ENCODE measurements at regions of chr15 and their contacts with region 1.

Region 1: DNA sequence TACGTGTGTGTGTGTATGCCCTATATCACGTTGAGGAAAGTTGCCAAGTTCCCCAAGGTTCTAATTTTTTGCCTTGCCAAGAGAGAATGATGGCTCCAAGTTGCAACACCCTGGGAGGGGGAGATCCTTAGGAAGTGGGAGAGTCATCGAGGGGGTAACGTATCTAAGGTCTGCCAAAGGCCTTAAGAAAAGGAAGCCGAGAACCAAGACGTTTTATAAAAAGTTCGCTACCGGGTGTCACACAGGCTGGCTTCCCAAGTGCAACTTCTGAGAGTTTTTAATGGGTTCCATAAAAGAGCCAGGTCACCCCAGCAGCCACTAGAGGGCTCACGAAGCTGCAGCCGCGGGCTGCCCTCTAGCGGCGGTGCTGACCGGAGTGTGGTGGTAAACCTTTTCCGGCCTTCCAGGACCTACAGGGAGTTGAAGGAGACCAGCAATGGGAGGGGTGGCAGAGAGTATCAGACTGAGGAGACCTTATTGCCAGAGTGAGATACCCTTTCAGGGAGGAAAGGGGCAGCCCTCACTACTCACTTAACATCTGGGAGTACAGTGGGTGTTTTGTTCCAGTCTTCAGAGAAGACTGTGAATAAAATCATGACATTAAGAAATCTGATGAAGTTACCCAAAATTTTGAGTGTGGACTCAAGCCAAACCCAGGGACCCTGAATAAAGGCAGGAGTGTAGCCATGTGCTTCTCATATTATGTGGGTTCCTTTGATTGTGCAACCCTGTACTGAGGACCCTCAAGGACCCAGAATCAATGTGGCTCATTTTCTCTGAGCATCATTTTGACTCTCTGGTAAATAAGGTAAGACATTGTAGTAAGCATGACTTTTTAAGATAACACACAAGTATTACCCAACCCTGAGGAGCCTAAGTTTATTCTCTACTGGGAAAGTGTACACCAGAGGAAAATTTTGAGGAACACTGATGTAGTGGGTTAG is 2.5 kb upstream of the RFX7 start:
- DNase-seq: peak; percentile 82
- H3K4me3 Mint-ChIP-seq: peak overlapping the region; percentile 89
- H3K27ac Mint-ChIP-seq: peak overlapping the region; percentile 98
- H3K4me1 Mint-ChIP-seq: peaks cover 31% of the 10 kb centered on the region
- H3K27me3 Mint-ChIP-seq: peaks cover 1% of the 10 kb centered on the region

Region 2: DNA sequence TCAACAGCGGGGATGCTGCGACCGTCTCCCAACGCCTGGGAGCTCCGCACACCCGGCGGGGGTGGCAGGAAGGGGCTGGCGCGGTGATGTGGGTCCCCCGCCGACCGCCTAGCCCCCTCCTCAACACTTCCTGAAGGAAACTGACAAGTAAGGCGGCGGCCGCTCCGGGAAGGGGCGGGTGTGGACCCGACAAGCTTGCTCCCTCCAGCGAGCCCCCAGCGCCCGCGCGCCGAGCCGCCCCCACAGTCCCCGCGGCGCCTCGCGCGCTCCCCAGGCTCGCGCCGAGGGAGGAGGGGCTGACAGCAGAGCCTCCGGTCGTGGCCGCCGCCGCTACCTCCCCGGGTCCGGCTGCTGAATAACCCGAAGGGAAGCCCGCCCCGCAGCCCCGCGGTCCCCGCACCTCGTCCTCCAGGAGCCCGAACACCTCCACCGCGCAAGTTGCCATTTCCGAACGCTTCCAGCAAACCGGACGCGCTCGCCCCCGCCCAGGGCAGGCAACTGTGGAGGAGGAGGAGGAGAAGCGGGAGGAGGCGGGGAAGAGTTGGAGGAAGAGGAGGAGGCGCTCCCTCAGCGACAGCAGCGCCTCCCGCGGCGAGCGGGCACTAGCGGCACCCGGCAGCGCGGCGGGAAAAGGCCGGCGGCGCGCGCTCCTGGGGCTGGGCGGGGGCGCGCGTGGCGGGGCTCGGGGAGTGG is 252.9 kb before region 1 on chr15 and contains the start of gene NEDD4:
- intact Hi-C with region 1: loop called (anchors 5 kb)
- DNase-seq: peak; percentile 68
- H3K4me3 Mint-ChIP-seq: peak within 1 kb of the TSS; percentile 85
- H3K27ac Mint-ChIP-seq: peak within 1 kb of the TSS; percentile 12
- H3K4me1 Mint-ChIP-seq: peaks cover 13% of the 10 kb centered on the region
- H3K27me3 Mint-ChIP-seq: peaks cover 34% of the 10 kb centered on the region
- total RNA-seq, gene NEDD4: 10.2 and 13.9 TPM in 2 replicates

Region 3: DNA sequence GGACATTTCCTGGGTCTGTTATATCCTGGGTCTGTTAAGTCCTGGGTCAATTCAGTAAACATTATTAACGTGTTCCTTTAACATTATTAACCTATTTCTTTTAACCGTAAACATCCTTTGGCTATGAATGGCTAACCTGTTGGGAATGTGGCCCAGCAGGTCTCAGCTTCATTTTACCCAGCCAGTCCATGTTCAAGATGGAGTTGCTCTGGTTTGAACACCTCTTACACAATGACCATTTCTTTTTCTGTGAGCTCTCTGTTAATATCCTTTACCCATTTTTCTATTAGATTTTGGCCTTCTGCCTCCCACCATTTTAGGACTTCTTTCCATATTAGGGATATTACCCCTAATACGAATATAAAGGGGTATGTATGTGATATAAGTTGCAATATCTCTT is 163.8 kb before region 1 on chr15:
- intact Hi-C with region 1: loop called (anchors 10 kb)
- DNase-seq: no peak
- H3K4me3 Mint-ChIP-seq: no peak overlapping the region
- H3K27ac Mint-ChIP-seq: no peak overlapping the region
- H3K4me1 Mint-ChIP-seq: peaks cover 2% of the 10 kb centered on the region
- H3K27me3 Mint-ChIP-seq: peaks cover 3% of the 10 kb centered on the region

Region 4: GRCh38 chr15:56207092-56207491 is 39.1 kb before region 1 on chr15:
- intact Hi-C with region 1: loop called (anchors 2 kb)
- DNase-seq: no peak
- H3K4me3 Mint-ChIP-seq: no peak overlapping the region
- H3K27ac Mint-ChIP-seq: no peak overlapping the region
- H3K4me1 Mint-ChIP-seq: peaks cover 74% of the 10 kb centered on the region
- H3K27me3 Mint-ChIP-seq: no peaks in the 10 kb centered on the region

Region 5: GRCh38 chr15:56428821-56429458 is 182.8 kb after region 1 on chr15:
- intact Hi-C with region 1: loop called (anchors 2 kb)
- DNase-seq: no peak
- H3K4me3 Mint-ChIP-seq: no peak overlapping the region
- H3K27ac Mint-ChIP-seq: no peak overlapping the region
- H3K4me1 Mint-ChIP-seq: no peaks in the 10 kb centered on the region
- H3K27me3 Mint-ChIP-seq: peaks cover 3% of the 10 kb centered on the region

Region 6: DNA sequence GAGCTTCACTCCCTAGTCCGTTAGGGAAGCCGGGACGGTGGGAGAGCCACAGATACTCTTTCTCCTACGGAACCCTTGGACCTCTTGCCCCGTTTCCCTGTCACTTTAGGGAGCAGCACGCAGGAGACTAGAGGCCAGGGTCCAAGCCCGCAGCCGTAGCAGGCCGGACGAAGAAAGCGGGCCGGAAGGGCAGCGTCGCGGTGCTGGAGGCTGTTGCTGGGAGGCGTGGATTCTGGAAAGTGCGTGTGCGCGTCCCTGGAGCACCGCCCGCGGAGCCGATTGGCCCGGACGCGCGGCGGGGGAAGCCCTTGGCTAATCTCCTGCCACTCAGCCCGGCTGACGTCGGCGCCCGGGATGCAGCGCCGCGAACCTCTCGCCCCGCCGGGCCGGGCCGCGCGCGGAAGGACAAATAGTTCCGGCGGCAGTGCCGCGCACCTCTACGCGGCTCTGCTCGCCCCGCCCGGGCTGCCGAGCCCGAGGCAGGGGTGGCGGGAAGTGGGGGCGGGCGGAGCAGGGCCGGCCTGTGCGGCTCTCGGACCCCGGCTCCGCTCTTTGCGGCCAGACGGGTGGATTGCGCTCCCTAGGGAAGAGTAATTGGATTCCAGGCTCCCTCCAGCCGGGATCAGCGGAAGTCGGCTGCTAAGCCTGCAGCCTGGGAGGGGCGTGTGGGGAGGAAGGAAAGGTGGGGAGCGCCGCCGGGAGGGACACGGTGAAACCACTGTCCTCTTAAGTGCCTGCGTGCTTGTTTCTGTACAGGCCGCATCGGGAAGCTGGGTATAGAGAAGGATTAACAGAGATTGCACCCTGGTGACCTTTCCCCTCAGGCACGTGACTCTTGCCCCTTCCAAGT is 641.0 kb after region 1 on chr15:
- intact Hi-C with region 1: loop called (anchors 10 kb)
- DNase-seq: peak; percentile 78
- H3K4me3 Mint-ChIP-seq: peak overlapping the region; percentile 77
- H3K27ac Mint-ChIP-seq: peak overlapping the region; percentile 34
- H3K4me1 Mint-ChIP-seq: peaks cover 19% of the 10 kb centered on the region
- H3K27me3 Mint-ChIP-seq: peaks cover 9% of the 10 kb centered on the region